ENCODE measurements at regions of chr16 and their contacts with region 1.

Region 1: GRCh38 chr16:30650369-30651123 is at the start of gene PRR14:
- DNase-seq: peak; percentile 96 to 99 (median 98)
- ATAC-seq: peak; percentile 89
- H3K4me3 ChIP-seq: peak within 1 kb of the TSS; percentile 86
- H3K4me3 Mint-ChIP-seq: peak within 1 kb of the TSS; percentile 99
- H3K27ac ChIP-seq: peak within 1 kb of the TSS; percentile 84 to 96
- H3K27ac Mint-ChIP-seq: peak within 1 kb of the TSS; percentile 95
- H3K4me1 ChIP-seq: peaks cover 30% of the 10 kb centered on the region
- H3K4me1 Mint-ChIP-seq: peaks cover 22% of the 10 kb centered on the region
- H3K27me3 ChIP-seq: no peaks in the 10 kb centered on the region
- H3K27me3 Mint-ChIP-seq: no peaks in the 10 kb centered on the region
- CTCF ChIP-seq: no peak
- total RNA-seq, gene PRR14: 50.2 to 51.7 TPM

Region 2: DNA sequence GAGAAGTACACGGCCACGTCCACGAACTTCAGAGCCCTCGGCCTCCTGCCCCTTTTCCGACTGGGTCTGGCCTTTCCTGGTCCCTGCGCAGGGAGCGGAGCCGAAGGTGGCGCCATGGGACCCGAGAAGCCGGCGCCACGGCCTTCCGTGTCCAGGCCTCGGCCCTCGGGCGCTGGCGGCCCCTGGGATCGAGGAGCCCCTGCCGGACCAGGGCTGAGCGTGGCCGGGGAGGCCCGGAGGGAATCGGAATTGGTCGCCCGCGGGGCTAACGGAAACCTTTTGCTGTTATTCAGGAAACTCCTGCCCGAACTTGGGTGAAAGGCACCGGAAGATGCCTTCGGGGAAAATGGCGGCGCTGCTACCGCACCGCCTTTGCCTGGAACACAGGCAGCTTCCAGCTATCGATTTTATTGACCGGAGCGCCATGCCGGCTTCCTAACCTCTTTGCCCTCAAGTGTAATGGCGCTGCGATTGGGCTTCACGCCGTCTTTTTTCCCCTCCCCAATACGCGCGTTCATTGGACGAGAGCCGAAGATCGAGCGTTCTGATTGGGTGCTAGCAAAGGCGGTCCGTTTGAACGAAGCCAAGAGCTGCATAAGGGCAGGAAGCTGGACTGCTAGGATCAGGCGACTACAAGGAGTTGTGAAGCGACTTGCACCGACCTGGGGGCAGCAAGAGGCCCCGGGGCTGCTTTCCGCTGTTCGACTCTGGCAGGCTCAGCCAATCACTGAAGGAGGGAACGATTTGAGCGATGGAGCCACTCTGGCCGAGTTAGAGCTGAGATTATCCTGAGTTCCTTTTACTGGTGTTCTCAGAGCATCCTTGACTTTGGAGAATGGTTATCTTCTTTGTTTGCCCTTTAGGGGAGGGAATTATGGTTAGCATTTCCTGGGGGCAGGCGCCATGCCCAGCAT is 40.4 kb before region 1 on chr16 and contains the start of gene ZNF689:
- CTCF ChIA-PET with region 1: interaction called, 10 read pairs
- POLR2A ChIA-PET with region 1: interaction called, 18 read pairs
- intact Hi-C with region 1: loop called (anchors 1 kb)
- DNase-seq: peak; percentile 88 to 97 (median 94)
- ATAC-seq: peak; percentile 92
- H3K4me3 ChIP-seq: peak within 1 kb of the TSS; percentile 74
- H3K4me3 Mint-ChIP-seq: peak within 1 kb of the TSS; percentile 91
- H3K27ac ChIP-seq: peak within 1 kb of the TSS; percentile 86 to 89
- H3K27ac Mint-ChIP-seq: peak within 1 kb of the TSS; percentile 93
- H3K4me1 ChIP-seq: peaks cover 26% of the 10 kb centered on the region
- H3K4me1 Mint-ChIP-seq: peaks cover 23% of the 10 kb centered on the region
- H3K27me3 ChIP-seq: no peaks in the 10 kb centered on the region
- H3K27me3 Mint-ChIP-seq: no peaks in the 10 kb centered on the region
- CTCF ChIP-seq: no peak
- total RNA-seq, gene ZNF689: 15.3 to 15.7 TPM

Region 3: GRCh38 chr16:30628627-30629540 is 21.7 kb before region 1 on chr16:
- CTCF ChIA-PET with region 1: interaction called, 6 read pairs
- POLR2A ChIA-PET with region 1: interaction called, 19 read pairs
- intact Hi-C with region 1: loop called (anchors 1 kb)
- DNase-seq: peak; percentile 78 to 93 (median 87)
- ATAC-seq: peak; percentile 99
- H3K4me3 ChIP-seq: peak overlapping the region; percentile 29
- H3K4me3 Mint-ChIP-seq: peak overlapping the region; percentile 59
- H3K27ac ChIP-seq: no peak overlapping the region
- H3K27ac Mint-ChIP-seq: peak overlapping the region; percentile 71
- H3K4me1 ChIP-seq: peaks cover 13% of the 10 kb centered on the region
- H3K4me1 Mint-ChIP-seq: peaks cover 9% of the 10 kb centered on the region
- H3K27me3 ChIP-seq: no peaks in the 10 kb centered on the region
- H3K27me3 Mint-ChIP-seq: no peaks in the 10 kb centered on the region
- CTCF ChIP-seq: peak; percentile 90

Region 4: GRCh38 chr16:30692381-30693064 is 42.0 kb after region 1 on chr16:
- CTCF ChIA-PET with region 1: interaction called, 28 read pairs
- POLR2A ChIA-PET with region 1: interaction called, 20 read pairs
- intact Hi-C with region 1: no loop called
- DNase-seq: no peak
- ATAC-seq: no peak
- H3K4me3 ChIP-seq: no peak overlapping the region
- H3K4me3 Mint-ChIP-seq: no peak overlapping the region
- H3K27ac ChIP-seq: no peak overlapping the region
- H3K27ac Mint-ChIP-seq: no peak overlapping the region
- H3K4me1 ChIP-seq: peaks cover 16% of the 10 kb centered on the region
- H3K4me1 Mint-ChIP-seq: peaks cover 16% of the 10 kb centered on the region
- H3K27me3 ChIP-seq: no peaks in the 10 kb centered on the region
- H3K27me3 Mint-ChIP-seq: no peaks in the 10 kb centered on the region
- CTCF ChIP-seq: no peak

Measured in CD4-positive, alpha-beta T cell (primary cell).